B cell (primary cell): ENCODE measurements at regions of chr7 and their contacts with region 1.

Region 1: DNA sequence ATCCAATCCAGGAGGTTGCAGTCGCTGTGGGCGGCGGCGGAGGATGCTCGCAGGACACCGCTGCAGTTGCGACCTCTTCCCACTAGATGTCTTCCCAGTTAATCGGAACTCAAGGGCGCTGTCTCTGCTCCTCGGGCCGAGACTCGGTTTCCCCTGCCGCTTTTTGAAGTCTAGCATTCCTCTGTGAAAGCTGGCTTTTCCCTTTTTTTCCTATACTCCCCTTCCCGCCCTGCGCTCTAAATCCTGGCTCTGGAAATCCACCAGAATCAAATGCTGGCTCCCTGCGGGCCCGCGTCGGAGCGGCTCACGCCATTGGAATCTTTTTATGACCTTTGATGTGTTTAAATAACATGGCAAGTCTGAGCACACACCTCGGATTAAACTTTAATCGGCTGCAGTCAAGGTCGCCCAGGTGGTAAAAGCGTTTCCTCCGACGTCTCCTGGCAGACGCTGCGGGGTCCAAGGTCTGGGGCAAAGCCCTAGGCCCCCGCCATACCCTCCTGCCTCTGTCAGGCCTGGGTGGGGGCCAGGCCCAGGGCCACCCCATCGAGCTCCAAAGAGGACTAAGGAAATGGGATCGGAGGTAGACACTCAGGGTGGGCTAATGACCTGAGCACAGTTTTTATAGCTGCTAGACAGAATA is 10.7 kb upstream of the HOXA13 start:
- DNase-seq: peak; percentile 70
- ATAC-seq: peak; percentile 73
- H3K4me3 ChIP-seq: peak overlapping the region in 3 of 5 experiments; percentile 17 to 24 (median 20)
- H3K4me3 Mint-ChIP-seq: peak overlapping the region; percentile 51
- H3K27ac ChIP-seq: no peak overlapping the region
- H3K27ac Mint-ChIP-seq: no peak overlapping the region
- H3K4me1 ChIP-seq: peaks cover 21 to 31% of the 10 kb centered on the region in 2 donors
- H3K4me1 Mint-ChIP-seq: peaks cover 21% of the 10 kb centered on the region
- H3K27me3 ChIP-seq: peaks cover 0 to 95% (median 82%) of the 10 kb centered on the region in 4 experiments
- H3K27me3 Mint-ChIP-seq: peaks cover 86% of the 10 kb centered on the region
- CTCF ChIP-seq: peak; percentile 84

Region 2: DNA sequence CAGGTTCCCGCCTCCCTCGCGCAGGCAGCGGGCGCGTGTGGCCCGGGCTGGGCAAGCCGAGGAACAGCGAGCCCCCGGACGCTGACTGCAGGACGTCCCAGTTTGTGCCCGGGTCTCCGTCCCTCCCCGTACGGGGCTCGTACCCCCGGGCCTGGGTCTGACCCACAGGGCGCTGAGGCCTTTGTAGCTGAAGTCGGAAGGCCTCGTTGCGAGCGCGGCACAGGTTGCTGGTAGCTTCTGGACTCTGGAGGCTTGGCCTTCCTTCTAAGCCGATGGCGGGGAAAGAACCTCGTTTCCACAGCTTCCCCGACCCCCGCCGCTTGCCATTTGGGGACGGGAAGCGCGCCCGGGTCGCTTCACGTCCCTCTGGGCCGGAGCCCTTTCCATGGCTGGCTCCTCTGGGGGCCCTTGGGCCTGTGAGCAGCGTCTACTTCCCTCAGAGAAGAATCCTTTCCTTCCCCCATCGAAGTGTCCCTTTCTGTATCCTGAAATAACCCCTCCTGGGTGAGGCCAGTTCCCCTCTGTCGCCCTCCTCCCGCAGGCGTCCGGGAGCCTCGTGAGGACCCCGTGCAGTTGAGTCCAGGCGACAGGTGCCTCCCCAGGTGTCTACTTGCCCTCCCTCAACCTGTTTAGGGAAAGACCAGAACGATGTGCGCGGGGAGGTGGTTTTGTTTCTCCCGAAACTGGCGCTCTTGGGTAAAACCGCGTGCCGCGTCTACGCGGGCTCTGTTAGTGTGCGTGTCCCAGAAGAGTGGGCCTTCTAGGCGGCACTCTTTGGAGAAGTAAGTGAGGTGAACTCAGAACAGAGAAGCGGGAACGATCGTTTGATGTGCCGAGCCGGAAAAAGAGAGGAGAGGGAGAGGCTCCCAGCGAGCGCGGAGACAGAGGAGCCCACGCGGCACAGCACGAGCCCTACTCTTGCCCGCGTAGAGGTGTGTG is 41.4 kb after region 1 on chr7:
- CTCF ChIA-PET with region 1: no interaction called
- POLR2A ChIA-PET with region 1: no interaction called
- intact Hi-C with region 1: loop called (anchors 2 kb)
- DNase-seq: peak; percentile 44
- ATAC-seq: no peak
- H3K4me3 ChIP-seq: no peak overlapping the region
- H3K4me3 Mint-ChIP-seq: peak overlapping the region; percentile 10
- H3K27ac ChIP-seq: no peak overlapping the region
- H3K27ac Mint-ChIP-seq: no peak overlapping the region
- H3K4me1 ChIP-seq: peaks cover 33 to 49% of the 10 kb centered on the region in 2 donors
- H3K4me1 Mint-ChIP-seq: peaks cover 24% of the 10 kb centered on the region
- H3K27me3 ChIP-seq: peaks cover 0 to 89% (median 73%) of the 10 kb centered on the region in 4 experiments
- H3K27me3 Mint-ChIP-seq: peaks cover 75% of the 10 kb centered on the region
- CTCF ChIP-seq: no peak

Region 3: DNA sequence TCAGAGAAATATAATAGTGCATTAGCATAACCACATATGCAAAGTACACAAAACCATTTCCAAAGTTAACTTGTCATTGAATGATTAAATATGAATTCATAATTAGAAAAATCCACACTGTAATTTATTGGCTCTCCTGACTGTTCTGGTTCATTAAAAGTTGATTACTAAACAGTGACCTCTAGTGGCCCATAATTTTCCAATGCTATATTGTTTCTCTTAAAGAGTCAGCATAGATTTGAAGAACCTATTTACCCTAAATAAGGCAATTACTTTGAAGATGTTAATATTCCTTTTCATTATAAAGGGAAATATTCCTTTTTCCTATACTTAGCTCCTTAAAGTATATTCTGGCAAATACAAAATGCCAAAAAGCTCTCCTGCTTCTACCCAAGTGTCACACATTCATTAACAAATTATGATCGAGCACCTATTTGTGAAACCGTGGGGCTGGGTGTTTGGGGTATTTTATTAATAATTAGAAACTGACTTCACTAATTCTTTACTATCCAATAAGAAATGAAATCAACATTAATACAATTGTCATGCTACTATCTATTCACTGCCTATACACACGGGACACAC is 365.9 kb after region 1 on chr7:
- CTCF ChIA-PET with region 1: interaction called, 3 read pairs
- POLR2A ChIA-PET with region 1: no interaction called
- intact Hi-C with region 1: loop called (anchors 5 kb)
- DNase-seq: peak; percentile 46
- ATAC-seq: no peak
- H3K4me3 ChIP-seq: no peak overlapping the region
- H3K4me3 Mint-ChIP-seq: no peak overlapping the region
- H3K27ac ChIP-seq: no peak overlapping the region
- H3K27ac Mint-ChIP-seq: no peak overlapping the region
- H3K4me1 ChIP-seq: no peaks in the 10 kb centered on the region
- H3K4me1 Mint-ChIP-seq: no peaks in the 10 kb centered on the region
- H3K27me3 ChIP-seq: no peaks in the 10 kb centered on the region
- H3K27me3 Mint-ChIP-seq: no peaks in the 10 kb centered on the region
- CTCF ChIP-seq: peak; percentile 73

Region 4: DNA sequence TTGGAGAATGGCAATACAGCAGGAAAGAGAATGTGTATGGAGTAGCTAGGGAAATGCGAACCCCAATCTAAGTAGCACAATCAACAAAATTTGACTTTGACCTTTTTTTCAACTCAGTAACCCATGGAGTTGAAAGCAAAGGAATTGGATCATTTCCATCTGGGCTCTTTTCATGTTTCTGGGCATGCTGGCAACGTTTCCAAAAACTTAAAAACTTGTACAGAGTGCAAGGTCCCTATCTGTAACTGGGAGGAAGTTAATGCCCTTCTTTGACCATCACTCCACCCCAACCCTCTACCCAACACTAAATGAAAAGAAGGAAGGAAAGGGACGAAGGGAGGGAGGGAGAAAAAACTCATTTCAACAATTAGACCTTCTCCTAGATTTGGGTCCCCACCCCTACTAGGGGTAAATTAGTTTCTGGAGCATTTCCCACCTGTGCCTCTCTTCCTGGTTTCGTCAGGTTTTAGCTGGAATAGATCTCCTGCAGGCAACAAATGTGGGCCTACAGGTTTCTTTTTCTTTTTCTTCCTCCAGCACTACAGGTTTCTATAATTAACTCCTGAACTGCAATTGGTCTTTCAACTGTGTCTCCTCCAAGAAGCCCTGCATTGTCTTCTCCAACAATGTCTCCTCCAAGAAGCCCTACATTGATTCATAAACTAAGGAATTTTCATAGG is 453.6 kb after region 1 on chr7:
- CTCF ChIA-PET with region 1: no interaction called
- POLR2A ChIA-PET with region 1: no interaction called
- intact Hi-C with region 1: no loop called
- DNase-seq: no peak
- ATAC-seq: no peak
- H3K4me3 ChIP-seq: no peak overlapping the region
- H3K4me3 Mint-ChIP-seq: peak overlapping the region; percentile 88
- H3K27ac ChIP-seq: no peak overlapping the region
- H3K27ac Mint-ChIP-seq: peak overlapping the region; percentile 59
- H3K4me1 ChIP-seq: peaks cover 10 to 12% of the 10 kb centered on the region in 2 donors
- H3K4me1 Mint-ChIP-seq: peaks cover 6% of the 10 kb centered on the region
- H3K27me3 ChIP-seq: no peaks in the 10 kb centered on the region
- H3K27me3 Mint-ChIP-seq: no peaks in the 10 kb centered on the region
- CTCF ChIP-seq: no peak

Region 5: DNA sequence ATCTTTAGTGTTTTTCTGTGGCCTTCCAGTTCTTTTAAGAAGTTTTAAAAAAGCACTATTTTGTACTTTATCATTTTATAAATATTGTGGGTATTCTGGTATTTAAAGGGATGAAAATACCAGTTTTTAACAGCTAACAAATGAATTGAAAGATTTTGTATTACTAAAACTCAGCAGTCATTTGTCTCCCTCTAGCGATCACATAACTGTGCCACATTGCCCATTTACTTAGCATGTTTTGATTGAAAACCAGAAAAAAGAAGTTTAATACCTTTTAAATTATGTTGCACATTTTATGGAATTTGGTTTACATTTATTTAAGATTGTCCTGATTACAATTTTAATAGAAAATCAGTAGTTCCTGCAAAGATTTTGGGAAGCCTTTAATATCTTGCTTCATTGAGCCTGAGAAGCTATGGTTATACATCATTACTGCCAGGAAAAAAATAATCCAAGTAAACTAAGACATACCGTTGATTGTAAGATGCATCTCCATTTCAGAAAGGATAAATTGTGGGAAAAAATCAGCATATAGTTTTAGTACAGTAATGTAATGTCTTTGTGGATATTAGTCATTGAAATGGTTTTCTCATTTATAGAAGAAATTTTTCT is 564.3 kb after region 1 on chr7:
- CTCF ChIA-PET with region 1: interaction called, 20 read pairs
- POLR2A ChIA-PET with region 1: no interaction called
- intact Hi-C with region 1: loop called (anchors 5 kb)
- DNase-seq: peak; percentile 24
- ATAC-seq: no peak
- H3K4me3 ChIP-seq: no peak overlapping the region
- H3K4me3 Mint-ChIP-seq: no peak overlapping the region
- H3K27ac ChIP-seq: no peak overlapping the region
- H3K27ac Mint-ChIP-seq: no peak overlapping the region
- H3K4me1 ChIP-seq: no peaks in the 10 kb centered on the region
- H3K4me1 Mint-ChIP-seq: no peaks in the 10 kb centered on the region
- H3K27me3 ChIP-seq: no peaks in the 10 kb centered on the region
- H3K27me3 Mint-ChIP-seq: no peaks in the 10 kb centered on the region
- CTCF ChIP-seq: peak; percentile 65

Region 6: DNA sequence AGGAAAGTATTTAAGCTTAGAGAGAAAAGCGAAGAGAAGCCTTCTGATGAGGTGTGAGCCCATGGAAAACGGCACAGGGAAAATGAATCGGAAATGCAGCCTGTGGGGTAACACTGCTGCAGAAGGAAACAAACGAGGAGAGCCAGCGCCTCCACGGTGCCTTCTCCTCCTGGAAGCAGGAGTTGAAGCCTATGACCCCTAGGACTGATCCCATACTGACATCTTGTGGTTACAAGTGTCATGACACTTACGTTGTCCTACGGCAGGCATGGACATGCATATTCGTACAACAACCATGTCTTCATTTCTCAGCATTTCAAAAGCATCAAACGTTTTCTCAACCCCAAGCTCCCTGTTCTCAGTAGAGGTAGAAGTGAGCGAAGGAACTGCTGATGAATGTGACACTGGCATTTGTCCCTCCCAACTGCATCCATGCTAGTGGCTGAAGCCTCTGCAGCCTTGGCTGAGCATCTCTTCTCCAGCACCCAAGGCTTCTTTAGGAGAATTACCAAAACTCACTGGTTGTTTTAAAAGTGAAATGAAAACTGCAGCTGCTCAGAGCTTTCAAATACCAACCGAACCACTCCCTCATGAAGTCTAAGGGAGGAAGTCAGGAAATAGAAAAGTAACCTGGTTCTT is 809.9 kb after region 1 on chr7:
- CTCF ChIA-PET with region 1: interaction called, 17 read pairs
- POLR2A ChIA-PET with region 1: no interaction called
- intact Hi-C with region 1: no loop called
- DNase-seq: peak; percentile 62
- ATAC-seq: peak; percentile 69
- H3K4me3 ChIP-seq: no peak overlapping the region
- H3K4me3 Mint-ChIP-seq: no peak overlapping the region
- H3K27ac ChIP-seq: no peak overlapping the region
- H3K27ac Mint-ChIP-seq: no peak overlapping the region
- H3K4me1 ChIP-seq: no peaks in the 10 kb centered on the region
- H3K4me1 Mint-ChIP-seq: peaks cover 26% of the 10 kb centered on the region
- H3K27me3 ChIP-seq: no peaks in the 10 kb centered on the region
- H3K27me3 Mint-ChIP-seq: no peaks in the 10 kb centered on the region
- CTCF ChIP-seq: peak; percentile 83